ENCODE measurements at regions of chr14 and their contacts with region 1.

Region 1: DNA sequence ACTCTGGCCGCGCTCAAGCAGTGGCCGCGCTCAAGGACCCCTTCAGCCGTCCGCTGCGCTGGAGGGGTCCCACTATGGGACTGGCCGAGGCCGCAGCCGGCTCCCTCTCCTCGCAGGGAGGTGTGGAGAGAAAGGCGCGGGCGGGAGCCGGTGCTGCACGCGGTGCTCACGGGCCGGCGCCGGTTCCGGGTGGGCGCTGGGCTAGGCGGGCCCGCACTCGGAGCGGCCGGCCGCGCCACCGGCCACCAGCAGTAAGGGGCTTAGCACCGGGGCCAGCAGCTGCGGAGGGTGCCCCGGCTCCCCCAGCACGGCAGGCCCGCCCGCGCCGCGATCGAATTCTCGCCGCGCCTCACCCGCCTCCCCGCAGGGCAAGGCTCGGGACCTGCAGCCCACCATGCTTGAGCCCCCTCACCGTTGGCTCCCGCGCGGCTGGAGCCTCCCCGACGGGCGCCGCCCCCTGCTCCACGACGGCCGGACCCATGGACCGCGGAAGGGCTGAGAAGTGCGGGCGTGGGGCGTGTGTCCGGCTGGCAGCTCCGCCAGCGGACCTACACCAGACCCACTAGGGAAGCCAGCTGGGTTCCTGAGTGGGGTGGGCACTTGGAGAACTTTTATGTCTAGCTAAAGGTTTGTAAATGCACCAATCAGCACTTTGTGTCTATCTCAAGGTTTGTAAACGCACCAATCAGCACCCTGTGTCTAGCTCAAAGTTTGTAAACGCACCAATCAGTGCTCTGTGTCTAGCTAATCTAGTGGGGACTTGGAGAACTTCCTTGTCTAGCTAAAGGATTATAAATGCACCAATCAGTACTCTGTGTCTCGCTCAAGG is 49.5 kb downstream of the KLHL28 start:
- DNase-seq: no peak
- ATAC-seq: peak; percentile 59

Region 2: GRCh38 chr14:44712024-44712815 is 200.0 kb before region 1 on chr14:
- intact Hi-C with region 1: no loop called
- DNase-seq: no peak
- ATAC-seq: no peak

Region 3: DNA sequence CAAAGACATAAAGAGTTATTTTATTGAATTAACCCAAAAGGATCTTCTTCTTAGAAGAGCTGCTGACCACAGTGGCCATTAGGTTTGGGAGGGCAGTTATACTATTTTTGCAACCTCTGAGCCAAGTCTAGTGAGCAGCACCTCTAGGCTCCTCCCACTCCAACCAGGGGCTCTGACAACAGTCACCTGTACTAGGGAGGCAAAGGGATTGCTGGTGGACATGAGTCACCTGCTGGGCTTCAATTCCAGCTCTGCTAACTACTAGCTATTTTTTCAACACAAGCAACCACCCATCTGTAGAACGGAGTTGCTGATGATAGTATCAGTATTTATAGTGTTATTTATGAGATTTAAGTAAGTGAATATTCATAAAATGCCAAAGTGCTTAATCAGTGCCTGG is 116.5 kb before region 1 on chr14:
- intact Hi-C with region 1: no loop called
- DNase-seq: no peak
- ATAC-seq: no peak

Region 4: GRCh38 chr14:44854114-44854513 is 58.1 kb before region 1 on chr14:
- intact Hi-C with region 1: no loop called
- DNase-seq: no peak
- ATAC-seq: no peak

Region 5: DNA sequence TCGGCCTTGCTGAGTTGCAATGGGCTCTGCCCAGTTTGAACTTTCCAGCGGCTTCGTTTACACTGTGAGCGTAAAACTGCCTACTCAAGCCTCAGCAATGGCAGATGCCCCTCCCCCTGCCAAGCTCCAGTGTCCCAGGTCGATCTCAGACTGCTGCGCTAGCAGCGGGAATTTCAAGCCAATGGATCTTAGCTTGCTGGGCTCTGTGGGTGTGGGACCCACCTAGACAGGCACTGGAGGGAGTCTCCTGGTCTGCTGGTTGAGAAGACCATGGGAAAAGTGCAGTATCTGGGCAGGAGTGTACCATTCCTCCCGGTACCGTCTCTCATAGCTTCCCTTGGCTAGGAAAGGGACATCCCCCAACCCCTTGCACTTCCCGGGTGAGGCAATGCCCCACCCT is 38.7 kb before region 1 on chr14:
- intact Hi-C with region 1: no loop called
- DNase-seq: no peak
- ATAC-seq: no peak

Region 6: DNA sequence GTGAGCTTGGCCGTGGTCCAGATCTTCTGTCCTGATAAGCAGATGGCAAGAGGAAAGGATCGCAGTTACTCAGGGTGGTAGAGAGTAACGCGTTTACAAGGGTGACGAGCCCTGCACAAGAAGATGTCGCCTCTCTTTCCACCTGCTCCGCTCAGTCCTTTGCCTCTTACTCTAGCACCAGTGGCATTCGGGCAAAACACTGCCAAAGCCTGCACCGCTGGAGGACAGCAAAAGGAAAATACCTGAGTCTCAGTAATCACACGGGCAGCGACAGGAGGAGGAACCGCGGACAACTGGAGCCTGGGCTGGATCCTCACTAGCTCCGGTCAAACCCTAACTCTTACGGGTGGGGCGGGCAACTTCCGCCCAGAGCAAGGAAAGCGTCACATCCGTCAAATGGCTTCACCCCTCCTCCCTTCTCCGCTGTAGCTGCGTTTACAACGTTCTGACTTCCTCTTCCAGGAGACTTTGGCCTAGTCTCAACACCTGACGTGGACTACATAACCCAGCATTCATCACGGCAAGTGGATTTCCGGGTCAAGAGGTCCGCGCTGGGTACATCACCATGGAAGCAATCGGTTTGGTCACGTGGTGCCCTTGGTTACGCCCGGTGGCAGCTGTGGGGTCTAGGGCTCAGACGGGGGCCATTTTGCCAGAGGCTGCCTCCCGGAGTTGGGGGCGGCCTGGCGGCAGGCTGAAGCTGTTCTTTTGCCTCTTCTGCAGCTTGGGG is 49.5 kb after region 1 on chr14 and contains the starts of genes KLHL28 and TOGARAM1:
- intact Hi-C with region 1: loop called (anchors 5 kb)
- DNase-seq: peak; percentile 97
- ATAC-seq: peak; percentile 98
- total RNA-seq, gene KLHL28: 13.0 TPM
- total RNA-seq, gene TOGARAM1: 20.5 TPM

Region 7: GRCh38 chr14:45253068-45253753 is 341.0 kb after region 1 on chr14 and contains the start of gene MIS18BP1:
- intact Hi-C with region 1: loop called (anchors 5 kb)
- DNase-seq: peak; percentile 98
- ATAC-seq: peak; percentile 97
- total RNA-seq, gene MIS18BP1: 7.6 TPM

Region 8: DNA sequence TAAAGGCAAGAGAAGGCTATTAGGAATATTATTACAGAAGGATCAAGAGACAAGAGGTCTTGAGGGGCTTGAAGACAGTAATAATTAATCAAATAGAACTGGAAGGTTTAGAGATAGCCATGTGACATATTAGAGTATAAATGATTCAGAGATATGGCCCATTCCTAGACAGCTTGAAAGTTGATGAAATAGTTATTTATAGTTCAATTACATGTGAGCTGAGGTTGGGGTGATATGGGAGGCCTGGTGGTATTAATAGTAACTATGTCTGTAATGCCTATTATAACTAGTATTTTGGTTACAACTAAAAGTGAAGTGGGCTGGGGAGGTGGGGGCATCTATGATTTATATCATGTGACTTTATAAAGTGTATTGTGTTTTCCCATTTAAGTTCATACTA is 354.8 kb after region 1 on chr14:
- intact Hi-C with region 1: loop called (anchors 1 kb)
- DNase-seq: no peak
- ATAC-seq: peak; percentile 89